ENCODE measurements at regions of chr7 and their contacts with region 1.

Region 1: GRCh38 chr7:114085592-114086501 is 167.0 kb upstream of the PPP1R3A start:
- DNase-seq: no peak
- ATAC-seq: peak; percentile 62
- H3K4me3 ChIP-seq: peak overlapping the region; percentile 46 to 70
- H3K27ac ChIP-seq: no peak overlapping the region
- H3K4me1 ChIP-seq: peaks cover 10% of the 10 kb centered on the region; the same call in 1 of the 2 replicates
- H3K27me3 ChIP-seq: peaks cover 16% of the 10 kb centered on the region
- CTCF ChIP-seq: no peak

Region 2: GRCh38 chr7:112939574-112940314 is 1146.1 kb before region 1 on chr7:
- CTCF ChIA-PET with region 1: no interaction called
- POLR2A ChIA-PET with region 1: no interaction called
- in situ Hi-C with region 1: no loop called
- intact Hi-C with region 1: no loop called
- DNase-seq: peak; percentile 99
- ATAC-seq: peak; percentile 99
- H3K4me3 ChIP-seq: peak overlapping the region; percentile 76 to 85
- H3K27ac ChIP-seq: peak overlapping the region; percentile 94
- H3K4me1 ChIP-seq: peaks cover 9% of the 10 kb centered on the region; the same call in 1 of the 2 replicates
- H3K27me3 ChIP-seq: no peaks in the 10 kb centered on the region; the same call in 1 of the 2 replicates
- CTCF ChIP-seq: no peak

Region 3: GRCh38 chr7:114310345-114311110 is 224.7 kb after region 1 on chr7:
- CTCF ChIA-PET with region 1: no interaction called
- POLR2A ChIA-PET with region 1: no interaction called
- in situ Hi-C with region 1: no loop called
- intact Hi-C with region 1: no loop called
- DNase-seq: no peak
- ATAC-seq: no peak
- H3K4me3 ChIP-seq: no peak overlapping the region
- H3K27ac ChIP-seq: no peak overlapping the region
- H3K4me1 ChIP-seq: no peaks in the 10 kb centered on the region
- H3K27me3 ChIP-seq: no peaks in the 10 kb centered on the region
- CTCF ChIP-seq: peak; percentile 7; the same call in 1 of the 2 replicates

Region 4: DNA sequence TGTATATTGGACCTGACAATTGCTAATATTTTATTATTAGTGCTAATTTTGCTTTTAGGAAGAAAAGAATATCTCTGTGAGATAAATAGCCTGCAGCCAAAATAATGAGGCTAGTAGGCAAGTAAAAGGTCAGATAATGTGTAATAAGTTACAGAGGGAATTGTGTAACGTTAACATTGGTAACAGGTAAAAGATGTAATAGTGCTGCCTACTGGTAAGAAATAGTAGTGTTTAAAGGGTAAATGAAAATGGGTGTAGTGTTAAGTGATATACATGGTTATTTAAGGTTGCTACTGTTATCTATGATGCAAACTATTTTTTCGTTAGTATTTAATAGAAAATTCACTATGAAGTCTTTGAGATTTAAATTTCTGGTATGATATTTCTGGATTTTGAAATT is 319.6 kb after region 1 on chr7:
- CTCF ChIA-PET with region 1: no interaction called
- POLR2A ChIA-PET with region 1: no interaction called
- in situ Hi-C with region 1: no loop called
- intact Hi-C with region 1: loop called (anchors 5 kb)
- DNase-seq: no peak
- ATAC-seq: no peak; the same call in 1 of the 2 replicates
- H3K4me3 ChIP-seq: no peak overlapping the region
- H3K27ac ChIP-seq: no peak overlapping the region
- H3K4me1 ChIP-seq: no peaks in the 10 kb centered on the region
- H3K27me3 ChIP-seq: no peaks in the 10 kb centered on the region
- CTCF ChIP-seq: peak; percentile 44; the same call in 1 of the 2 replicates

Region 5: DNA sequence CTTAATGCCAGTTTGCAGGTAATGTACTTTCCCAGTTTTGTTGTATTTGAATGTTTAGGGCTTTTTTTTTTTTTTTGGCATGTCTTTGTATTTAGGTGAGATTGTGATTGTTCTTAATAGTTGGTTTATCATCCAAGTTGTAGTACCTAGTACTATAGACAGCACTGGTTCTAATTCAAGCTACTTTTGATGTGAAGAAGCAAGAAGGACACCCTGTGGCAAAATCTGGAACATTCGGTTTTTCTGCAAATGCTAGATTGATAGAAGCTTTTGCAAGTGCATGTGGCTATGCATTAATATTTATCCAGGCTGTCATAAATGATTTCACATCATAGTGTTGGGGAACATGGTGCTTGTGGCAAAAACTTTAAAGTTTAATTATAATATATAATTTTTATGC is 577.7 kb after region 1 on chr7:
- CTCF ChIA-PET with region 1: interaction called, 6 read pairs
- POLR2A ChIA-PET with region 1: no interaction called
- in situ Hi-C with region 1: no loop called
- intact Hi-C with region 1: loop called (anchors 2 kb)
- DNase-seq: no peak
- ATAC-seq: peak; percentile 58; the same call in 1 of the 2 replicates
- H3K4me3 ChIP-seq: no peak overlapping the region
- H3K27ac ChIP-seq: no peak overlapping the region
- H3K4me1 ChIP-seq: peaks cover 3% of the 10 kb centered on the region
- H3K27me3 ChIP-seq: no peaks in the 10 kb centered on the region
- CTCF ChIP-seq: peak; percentile 24; the same call in 1 of the 2 replicates

Region 6: DNA sequence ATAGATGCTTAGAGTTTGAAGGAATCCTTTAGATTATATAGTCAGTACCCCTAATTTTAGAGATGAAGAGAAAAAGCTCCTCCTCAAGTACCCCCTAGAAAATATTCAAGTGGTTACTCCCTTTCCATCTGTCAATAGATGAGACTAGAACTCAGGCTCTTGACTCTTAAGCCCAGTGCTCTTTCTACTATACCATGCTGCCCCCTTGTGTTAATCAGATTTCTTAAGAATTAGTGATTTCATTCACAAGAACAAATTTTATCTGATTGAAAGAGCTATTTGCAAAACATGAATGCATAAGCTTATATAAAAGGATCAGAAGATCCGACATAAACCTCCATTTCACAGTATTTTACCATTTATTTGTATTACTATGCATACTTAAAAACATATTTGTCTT is 1765.4 kb after region 1 on chr7:
- CTCF ChIA-PET with region 1: no interaction called
- POLR2A ChIA-PET with region 1: no interaction called
- in situ Hi-C with region 1: no loop called
- intact Hi-C with region 1: loop called (anchors 10 kb)
- DNase-seq: peak; percentile 8
- ATAC-seq: no peak
- H3K4me3 ChIP-seq: no peak overlapping the region
- H3K27ac ChIP-seq: no peak overlapping the region
- H3K4me1 ChIP-seq: no peaks in the 10 kb centered on the region
- H3K27me3 ChIP-seq: no peaks in the 10 kb centered on the region
- CTCF ChIP-seq: peak; percentile 54; the same call in 1 of the 2 replicates

Measured in Panc1 (cell line).